Uterus (tissue), 4 donors: ENCODE measurements at regions of chr2 and their contacts with region 1.

Region 1: DNA sequence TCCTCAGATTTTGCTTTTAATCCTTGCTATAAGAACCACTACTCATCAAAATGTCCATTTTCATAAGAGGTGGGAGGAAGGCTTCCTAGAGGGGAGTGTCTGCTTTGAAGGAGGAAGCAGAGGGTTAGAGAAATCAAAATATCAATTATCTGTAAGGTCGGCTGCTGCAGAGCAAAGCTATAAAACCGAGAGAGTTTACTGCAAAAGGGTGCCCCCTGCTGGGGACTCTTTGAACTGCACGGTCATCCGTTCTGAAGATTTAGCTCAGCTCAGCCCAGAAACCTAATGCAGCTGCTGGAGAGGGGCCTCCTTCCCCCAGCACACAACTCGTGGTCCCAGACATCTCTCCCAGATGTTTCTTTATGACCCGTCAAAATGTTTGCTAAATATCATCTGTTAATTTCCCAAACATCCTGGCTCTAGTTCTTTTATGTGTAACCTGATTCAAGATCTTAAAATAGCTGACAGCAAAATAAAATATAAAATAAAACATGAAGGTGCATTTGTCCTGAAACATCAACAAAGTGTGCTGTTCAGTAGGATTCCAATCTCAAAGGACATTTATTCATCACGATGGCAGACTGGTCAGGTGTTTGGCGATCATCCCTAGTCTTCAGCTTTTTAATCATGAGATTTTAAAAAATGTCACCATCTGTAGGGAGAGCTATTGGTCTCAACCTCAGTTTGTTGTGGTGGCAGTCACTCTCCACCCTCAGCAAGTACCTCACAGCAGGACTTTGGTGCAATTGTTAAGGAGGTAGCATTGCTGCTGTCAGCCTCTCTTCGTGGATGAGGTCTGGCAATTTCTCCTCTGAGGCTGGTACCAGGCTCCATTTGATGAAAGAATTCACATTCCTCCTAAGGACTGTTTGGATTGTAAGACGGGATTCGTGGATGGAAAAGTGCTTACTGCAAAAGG is 185.9 kb downstream of the MTX2 start:
- DNase-seq: peak; percentile 92 to 93
- H3K4me3 ChIP-seq: no peak overlapping the region
- H3K27ac ChIP-seq: peak overlapping the region; percentile 43 to 75
- H3K4me1 ChIP-seq: no peaks in the 10 kb centered on the region
- H3K27me3 ChIP-seq: no peaks in the 10 kb centered on the region
- CTCF ChIP-seq: peak; percentile 74 to 95 (median 89)
- POLR2A ChIP-seq: no peak

Region 2: DNA sequence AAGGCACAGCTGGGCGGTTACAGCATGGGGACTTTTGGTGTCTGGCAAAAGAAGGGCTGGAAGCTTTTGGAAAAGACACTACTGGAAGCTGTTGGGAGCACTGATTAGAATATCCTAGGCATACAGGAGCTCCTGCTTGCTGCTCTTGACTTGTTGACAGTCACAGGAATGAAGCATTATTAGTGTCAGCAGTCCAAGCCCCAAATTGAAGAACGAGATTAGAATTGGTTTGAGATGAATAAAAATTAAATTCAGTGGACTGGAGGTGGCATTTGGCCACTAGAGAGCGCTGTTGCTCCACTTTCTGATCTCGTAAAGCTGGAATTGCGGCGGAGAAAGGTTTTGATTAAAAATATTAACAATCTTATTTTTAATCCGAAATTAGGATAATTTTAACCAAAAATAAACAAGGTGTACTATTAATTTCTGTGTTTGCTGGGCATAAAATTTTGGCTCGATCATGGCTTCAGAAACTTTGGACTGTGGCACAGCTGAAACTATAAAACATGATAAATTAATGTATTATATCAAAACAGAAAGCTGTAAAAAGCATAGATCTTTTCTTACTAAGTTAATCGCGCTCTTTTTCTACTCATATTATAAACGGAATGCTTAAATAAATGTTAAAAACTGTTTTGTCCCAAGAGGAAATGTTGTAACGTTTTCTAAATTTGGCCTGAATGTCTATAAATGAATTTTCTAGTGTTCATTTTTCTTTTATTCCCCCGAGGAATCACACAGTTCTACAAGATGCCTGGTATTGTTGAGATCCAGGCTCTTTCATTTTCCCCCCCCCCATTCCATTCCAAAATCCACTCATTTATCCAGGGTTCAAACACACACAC is 328.0 kb before region 1 on chr2:
- intact Hi-C with region 1: no loop called
- DNase-seq: peak; percentile 81 to 88
- H3K4me3 ChIP-seq: peak overlapping the region; percentile 15 to 16
- H3K27ac ChIP-seq: peak overlapping the region; percentile 98 to 99
- H3K4me1 ChIP-seq: no peaks in the 10 kb centered on the region
- H3K27me3 ChIP-seq: no peaks in the 10 kb centered on the region
- CTCF ChIP-seq: peak; percentile 84 to 95 (median 89)
- POLR2A ChIP-seq: peak; percentile 19 to 30

Region 3: DNA sequence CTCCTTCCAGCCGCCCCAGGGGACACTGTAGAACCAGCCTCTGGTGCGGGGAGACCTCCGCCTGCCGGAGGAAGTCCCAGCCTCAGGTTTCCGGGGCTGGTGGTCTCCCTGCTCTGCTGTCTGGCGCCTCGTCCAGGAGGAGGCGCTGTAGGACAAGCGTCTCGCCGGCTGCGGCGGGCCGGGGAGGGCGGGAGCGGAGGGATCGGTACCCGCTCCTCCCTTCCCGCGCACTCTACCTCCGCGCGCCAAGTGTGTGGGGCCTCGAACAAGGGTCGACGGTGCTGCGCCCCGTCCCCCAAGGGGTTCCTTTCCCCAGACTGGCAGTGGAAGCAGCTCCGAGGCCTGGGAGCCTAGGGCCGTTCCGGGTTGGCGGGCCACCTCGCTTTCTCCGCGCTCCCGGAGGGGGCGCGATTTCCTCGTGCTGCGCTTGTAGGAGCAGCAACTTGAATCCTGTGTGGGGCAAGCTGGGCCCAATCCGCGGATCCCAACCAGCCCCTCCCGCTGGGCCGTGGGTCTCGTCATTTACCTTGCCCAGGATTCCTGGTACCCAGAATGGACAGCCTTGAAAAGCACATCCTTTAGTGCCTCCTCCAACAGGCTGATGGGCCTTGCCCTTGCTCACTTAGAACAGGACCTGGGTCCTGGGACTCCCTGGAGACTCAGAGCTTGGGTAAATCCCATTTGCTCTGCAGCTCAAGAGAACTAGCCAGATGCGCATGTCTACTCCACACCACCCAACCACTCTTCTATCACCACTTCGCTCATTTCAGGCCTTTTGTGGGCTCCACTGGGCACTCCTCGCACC is 314.4 kb before region 1 on chr2:
- intact Hi-C with region 1: loop called (anchors 5 kb)
- DNase-seq: peak; percentile 81 to 88
- H3K4me3 ChIP-seq: peak overlapping the region; percentile 72 to 85
- H3K27ac ChIP-seq: peak overlapping the region; percentile 98 to 99
- H3K4me1 ChIP-seq: peaks cover 8 to 10% of the 10 kb centered on the region in 2 donors
- H3K27me3 ChIP-seq: no peaks in the 10 kb centered on the region
- CTCF ChIP-seq: peak; percentile 94 to 99 (median 96)
- POLR2A ChIP-seq: peak in 1 of 2 donors; percentile 43

Region 4: GRCh38 chr2:176269319-176270099 is 185.6 kb before region 1 on chr2 and contains the start of gene MTX2:
- intact Hi-C with region 1: loop called (anchors 10 kb)
- DNase-seq: peak; percentile 56 to 73
- H3K4me3 ChIP-seq: peak within 1 kb of the TSS; percentile 79 to 80
- H3K27ac ChIP-seq: peak within 1 kb of the TSS; percentile 77 to 78
- H3K4me1 ChIP-seq: peaks cover 0 to 4% of the 10 kb centered on the region in 2 donors
- H3K27me3 ChIP-seq: no peaks in the 10 kb centered on the region
- CTCF ChIP-seq: peak in 3 of 4 experiments; percentile 13 to 43 (median 17)
- POLR2A ChIP-seq: peak in 1 of 2 donors; percentile 38
- total RNA-seq, gene MTX2: 28.1 to 32.1 (median 31.3) TPM

Region 5: DNA sequence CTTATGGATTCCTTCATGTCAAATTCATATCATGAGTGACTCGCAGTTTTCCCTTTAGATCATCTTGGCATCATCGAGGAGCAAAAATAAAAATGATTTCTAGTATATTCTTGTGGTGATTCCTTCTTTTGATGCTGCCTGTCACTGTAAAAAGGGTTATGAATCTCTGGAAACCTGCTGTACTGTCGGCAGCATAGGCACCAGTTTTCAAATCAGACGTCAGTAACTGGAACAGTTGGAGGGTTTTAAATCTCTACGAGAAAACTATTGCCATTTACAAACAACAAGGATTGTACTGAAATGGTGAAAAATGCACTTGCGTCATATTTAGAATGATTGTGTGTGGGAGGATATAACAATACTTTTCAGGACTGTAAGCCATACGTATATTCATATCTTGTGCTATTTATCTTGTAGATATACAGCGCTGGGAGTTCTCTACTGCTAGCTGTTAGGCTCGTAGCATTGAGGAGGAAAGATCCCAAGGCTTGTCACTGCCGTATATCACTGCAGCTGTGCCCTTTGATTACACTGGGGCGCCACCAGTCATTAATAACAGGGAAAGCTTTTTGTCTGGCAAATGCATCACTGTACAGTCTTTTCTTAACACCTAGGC is 134.8 kb after region 1 on chr2:
- intact Hi-C with region 1: no loop called
- DNase-seq: no peak
- H3K4me3 ChIP-seq: no peak overlapping the region
- H3K27ac ChIP-seq: no peak overlapping the region
- H3K4me1 ChIP-seq: no peaks in the 10 kb centered on the region
- H3K27me3 ChIP-seq: no peaks in the 10 kb centered on the region
- CTCF ChIP-seq: no peak
- POLR2A ChIP-seq: no peak